Endothelial cell of umbilical vein (primary cell): ENCODE measurements at regions of chr14 and their contacts with region 1.

Region 1: GRCh38 chr14:29548948-29549370 is 378.7 kb downstream of the PRKD1 start:
- DNase-seq: peak; percentile 69
- H3K4me3 ChIP-seq: no peak overlapping the region
- H3K27ac ChIP-seq: no peak overlapping the region
- H3K4me1 ChIP-seq: no peaks in the 10 kb centered on the region
- H3K27me3 ChIP-seq: peaks cover 0 to 4% of the 10 kb centered on the region in 2 experiments
- CTCF ChIP-seq: peak; percentile 27 to 41
- POLR2A ChIP-seq: no peak

Region 2: DNA sequence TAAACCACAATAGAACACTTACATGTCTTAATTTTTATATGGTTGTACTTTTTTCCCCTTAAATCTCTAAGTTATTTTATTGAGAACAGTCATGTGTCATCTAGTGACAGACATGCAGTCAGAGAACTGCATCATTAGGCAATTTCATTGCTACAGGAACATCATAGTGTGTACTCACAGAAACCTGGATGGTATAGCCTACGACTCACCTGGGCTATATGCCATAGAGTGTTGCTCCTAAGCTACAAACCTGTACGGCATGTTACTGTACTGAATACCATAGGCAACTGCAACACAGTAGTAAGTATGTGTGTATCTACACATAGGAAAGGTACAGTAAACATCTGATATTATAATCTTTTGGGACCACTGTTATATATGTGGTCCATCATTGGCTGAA is 178.9 kb before region 1 on chr14:
- CTCF ChIA-PET with region 1: no interaction called
- POLR2A ChIA-PET with region 1: no interaction called
- dilution Hi-C with region 1: no loop called
- intact Hi-C with region 1: no loop called
- DNase-seq: no peak
- H3K4me3 ChIP-seq: no peak overlapping the region
- H3K27ac ChIP-seq: no peak overlapping the region
- H3K4me1 ChIP-seq: no peaks in the 10 kb centered on the region
- H3K27me3 ChIP-seq: no peaks in the 10 kb centered on the region
- CTCF ChIP-seq: no peak
- POLR2A ChIP-seq: no peak

Region 3: DNA sequence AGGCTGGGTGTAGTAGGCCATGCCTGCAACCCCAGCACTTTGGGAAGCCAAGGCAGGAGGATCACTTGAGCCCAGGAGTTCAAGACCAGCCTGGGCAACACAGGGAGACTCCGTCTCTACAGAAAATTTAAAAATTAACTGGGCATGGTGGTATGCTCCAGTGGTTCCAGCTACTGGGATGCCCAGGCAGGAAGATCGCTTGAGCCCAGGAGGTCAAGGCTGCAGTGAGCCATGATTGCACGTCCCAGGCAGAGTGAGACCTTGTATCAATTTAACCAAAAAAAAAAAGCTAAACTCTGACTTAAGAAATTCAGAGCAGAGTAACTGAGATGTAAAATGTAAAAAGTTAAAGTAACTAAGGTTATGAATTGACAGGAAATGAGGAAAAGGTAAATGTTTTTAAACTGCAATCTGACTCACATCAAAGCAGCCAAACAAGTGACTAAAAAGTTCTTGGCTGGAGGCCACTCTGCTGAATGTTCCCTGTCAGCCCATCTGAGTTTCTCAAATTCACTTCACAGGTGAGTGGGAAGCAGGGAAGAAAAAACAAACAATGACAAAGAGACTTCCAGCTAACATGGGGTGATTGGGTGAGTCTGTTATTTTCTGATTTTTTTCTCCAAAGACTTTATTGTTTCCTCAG is 357.4 kb after region 1 on chr14:
- CTCF ChIA-PET with region 1: no interaction called
- POLR2A ChIA-PET with region 1: no interaction called
- dilution Hi-C with region 1: no loop called
- intact Hi-C with region 1: no loop called
- DNase-seq: peak; percentile 60
- H3K4me3 ChIP-seq: no peak overlapping the region
- H3K27ac ChIP-seq: no peak overlapping the region
- H3K4me1 ChIP-seq: peaks cover 10% of the 10 kb centered on the region
- H3K27me3 ChIP-seq: no peaks in the 10 kb centered on the region
- CTCF ChIP-seq: no peak
- POLR2A ChIP-seq: no peak

Region 4: DNA sequence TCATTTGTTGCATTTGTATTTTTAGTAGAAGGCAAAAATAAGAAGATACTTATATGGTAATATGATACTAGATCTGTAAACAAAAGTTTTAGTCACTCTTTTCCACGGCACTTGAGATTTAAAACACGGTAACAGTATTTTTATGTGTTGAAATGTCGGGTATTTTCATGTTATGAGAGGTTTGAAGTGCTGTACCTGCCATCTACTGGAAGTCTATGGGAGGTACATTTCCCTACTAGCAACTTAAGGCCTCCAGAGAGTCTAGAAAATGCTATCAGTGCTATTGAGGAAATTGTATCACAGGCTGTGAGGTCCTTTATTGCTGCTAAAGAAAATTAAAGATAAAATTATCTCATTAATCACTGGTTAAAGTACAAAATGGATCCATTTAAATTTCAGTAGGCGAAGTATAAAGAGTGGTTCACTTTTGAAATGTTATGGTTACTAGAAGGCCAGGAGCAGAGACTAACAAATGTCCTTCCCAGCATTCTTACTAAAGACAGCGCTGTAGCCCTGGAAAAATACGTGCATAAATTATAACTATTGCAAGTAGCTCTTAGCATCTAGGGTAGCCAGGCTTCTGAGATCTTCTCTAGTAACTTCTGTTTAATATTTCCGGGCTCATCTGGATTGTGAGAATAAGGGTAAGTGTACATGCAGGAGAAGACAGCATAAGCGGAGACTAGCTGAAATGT is 456.3 kb after region 1 on chr14:
- CTCF ChIA-PET with region 1: interaction called, 26 read pairs
- POLR2A ChIA-PET with region 1: no interaction called
- dilution Hi-C with region 1: no loop called
- intact Hi-C with region 1: loop called (anchors 1 kb)
- DNase-seq: peak; percentile 53
- H3K4me3 ChIP-seq: no peak overlapping the region
- H3K27ac ChIP-seq: no peak overlapping the region
- H3K4me1 ChIP-seq: no peaks in the 10 kb centered on the region
- H3K27me3 ChIP-seq: peaks cover 0 to 6% of the 10 kb centered on the region in 2 experiments
- CTCF ChIP-seq: peak; percentile 29 to 56
- POLR2A ChIP-seq: no peak

Region 5: GRCh38 chr14:30283826-30284446 is 735.0 kb after region 1 on chr14:
- CTCF ChIA-PET with region 1: interaction called, 10 read pairs
- POLR2A ChIA-PET with region 1: no interaction called
- dilution Hi-C with region 1: no loop called
- intact Hi-C with region 1: no loop called
- DNase-seq: peak; percentile 60
- H3K4me3 ChIP-seq: no peak overlapping the region
- H3K27ac ChIP-seq: no peak overlapping the region
- H3K4me1 ChIP-seq: no peaks in the 10 kb centered on the region
- H3K27me3 ChIP-seq: no peaks in the 10 kb centered on the region
- CTCF ChIP-seq: peak; percentile 66 to 68
- POLR2A ChIP-seq: no peak

Region 6: DNA sequence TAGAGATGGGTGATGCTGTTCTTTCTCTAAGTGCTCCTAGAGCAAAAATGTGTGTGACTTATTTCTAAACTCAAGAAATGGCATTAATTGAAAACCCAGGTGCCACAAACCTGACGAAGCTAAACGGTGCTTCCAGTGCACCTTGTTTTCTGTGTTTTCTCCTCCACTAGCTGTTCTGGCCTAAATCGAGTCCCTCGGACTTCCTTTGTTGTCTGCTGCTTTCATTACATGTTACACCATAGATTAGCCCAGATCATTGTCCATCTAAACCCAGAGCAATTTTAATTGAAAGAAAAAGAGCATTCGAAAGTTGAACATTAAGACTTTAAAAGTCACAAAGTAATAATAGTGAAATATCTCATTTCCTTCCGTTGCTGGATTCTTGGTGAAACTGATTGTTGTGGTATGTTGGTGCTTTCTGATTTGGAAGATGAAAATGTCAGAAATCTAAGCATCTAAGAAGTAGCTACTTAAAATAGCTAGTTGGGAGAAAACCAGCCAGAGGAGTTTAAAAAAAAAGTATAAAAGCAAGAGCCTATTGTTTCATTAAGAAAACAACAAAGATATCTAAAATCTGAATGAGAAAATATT is 790.4 kb after region 1 on chr14:
- CTCF ChIA-PET with region 1: no interaction called
- POLR2A ChIA-PET with region 1: no interaction called
- dilution Hi-C with region 1: no loop called
- intact Hi-C with region 1: no loop called
- DNase-seq: no peak
- H3K4me3 ChIP-seq: no peak overlapping the region
- H3K27ac ChIP-seq: no peak overlapping the region
- H3K4me1 ChIP-seq: no peaks in the 10 kb centered on the region
- H3K27me3 ChIP-seq: no peaks in the 10 kb centered on the region
- CTCF ChIP-seq: no peak
- POLR2A ChIP-seq: no peak

Region 7: DNA sequence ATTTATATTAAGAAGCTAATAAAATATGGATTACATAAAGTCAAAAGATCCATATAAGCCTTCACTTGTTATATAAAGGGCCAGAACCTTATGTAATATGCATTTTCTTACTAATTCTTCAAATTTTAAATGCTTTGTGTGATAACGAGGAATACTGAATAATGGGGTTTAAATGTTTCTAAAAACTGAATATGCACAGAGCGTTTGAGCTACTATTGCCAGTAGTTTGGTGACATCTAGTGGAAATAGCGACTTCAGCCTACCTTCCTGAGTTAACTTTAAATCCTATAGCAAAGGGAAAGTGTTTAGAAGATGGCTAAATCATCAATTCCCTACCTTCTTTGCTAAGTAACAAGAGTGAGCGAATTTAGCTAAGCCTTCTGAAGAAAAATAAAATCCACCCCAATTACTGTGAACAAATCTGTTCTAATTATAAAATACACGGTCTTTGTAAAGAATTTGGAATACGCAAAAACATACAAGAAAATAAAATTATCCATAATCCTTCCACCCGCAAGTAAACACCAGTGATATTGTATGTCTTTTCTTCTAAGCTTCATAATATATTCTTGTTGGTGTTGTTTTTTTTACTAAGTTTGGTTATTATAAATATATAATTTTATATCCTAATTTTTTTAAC is 894.5 kb after region 1 on chr14:
- CTCF ChIA-PET with region 1: no interaction called
- POLR2A ChIA-PET with region 1: no interaction called
- dilution Hi-C with region 1: no loop called
- intact Hi-C with region 1: loop called (anchors 2 kb)
- DNase-seq: peak; percentile 2
- H3K4me3 ChIP-seq: no peak overlapping the region
- H3K27ac ChIP-seq: no peak overlapping the region
- H3K4me1 ChIP-seq: no peaks in the 10 kb centered on the region
- H3K27me3 ChIP-seq: peaks cover 0 to 5% of the 10 kb centered on the region in 2 experiments
- CTCF ChIP-seq: no peak
- POLR2A ChIP-seq: no peak